Activated naive CD4-positive, alpha-beta T cell treated with anti-CD3 and anti-CD28 coated beads for 36 hours (primary cell): ENCODE measurements at regions of chr7 and their contacts with region 1.

Region 1: GRCh38 chr7:12458520-12459131 is 55.0 kb upstream of the VWDE start:
- DNase-seq: no peak
- H3K4me3 Mint-ChIP-seq: no peak overlapping the region
- H3K27ac Mint-ChIP-seq: no peak overlapping the region
- H3K4me1 Mint-ChIP-seq: no peaks in the 10 kb centered on the region
- H3K27me3 Mint-ChIP-seq: peaks cover 11% of the 10 kb centered on the region

Region 2: DNA sequence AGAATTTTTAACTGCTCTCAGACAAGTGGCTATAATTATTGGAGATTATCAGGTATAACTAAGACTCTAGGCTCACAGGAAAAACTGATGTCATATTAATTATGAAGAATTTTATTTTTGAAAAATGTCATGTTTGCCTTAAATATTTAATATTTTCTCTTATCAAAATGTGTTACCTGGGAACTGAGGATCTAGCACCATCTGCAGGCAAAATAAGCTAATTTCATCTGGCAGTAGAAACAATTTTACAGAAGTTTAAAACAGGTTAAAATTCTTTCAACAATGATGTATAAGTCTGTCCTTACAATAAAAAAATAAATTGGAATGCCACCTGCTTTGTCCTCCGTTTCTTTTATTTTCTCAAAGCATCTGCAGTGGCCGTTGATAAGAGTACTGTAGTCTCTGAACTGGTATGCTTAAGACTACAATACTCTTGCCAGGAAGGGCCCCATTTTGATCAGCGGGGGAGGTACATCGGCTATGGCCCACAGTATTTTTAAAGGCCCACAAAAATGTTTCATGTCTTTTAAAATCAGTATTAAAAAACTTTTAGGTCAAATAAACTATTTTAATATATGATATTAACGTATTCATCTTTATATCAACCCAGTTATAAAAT is 136.2 kb before region 1 on chr7:
- CTCF ChIA-PET with region 1: no interaction called
- intact Hi-C with region 1: no loop called
- DNase-seq: peak; percentile 31
- H3K4me3 Mint-ChIP-seq: no peak overlapping the region
- H3K27ac Mint-ChIP-seq: no peak overlapping the region
- H3K4me1 Mint-ChIP-seq: peaks cover 2% of the 10 kb centered on the region
- H3K27me3 Mint-ChIP-seq: no peaks in the 10 kb centered on the region

Region 3: DNA sequence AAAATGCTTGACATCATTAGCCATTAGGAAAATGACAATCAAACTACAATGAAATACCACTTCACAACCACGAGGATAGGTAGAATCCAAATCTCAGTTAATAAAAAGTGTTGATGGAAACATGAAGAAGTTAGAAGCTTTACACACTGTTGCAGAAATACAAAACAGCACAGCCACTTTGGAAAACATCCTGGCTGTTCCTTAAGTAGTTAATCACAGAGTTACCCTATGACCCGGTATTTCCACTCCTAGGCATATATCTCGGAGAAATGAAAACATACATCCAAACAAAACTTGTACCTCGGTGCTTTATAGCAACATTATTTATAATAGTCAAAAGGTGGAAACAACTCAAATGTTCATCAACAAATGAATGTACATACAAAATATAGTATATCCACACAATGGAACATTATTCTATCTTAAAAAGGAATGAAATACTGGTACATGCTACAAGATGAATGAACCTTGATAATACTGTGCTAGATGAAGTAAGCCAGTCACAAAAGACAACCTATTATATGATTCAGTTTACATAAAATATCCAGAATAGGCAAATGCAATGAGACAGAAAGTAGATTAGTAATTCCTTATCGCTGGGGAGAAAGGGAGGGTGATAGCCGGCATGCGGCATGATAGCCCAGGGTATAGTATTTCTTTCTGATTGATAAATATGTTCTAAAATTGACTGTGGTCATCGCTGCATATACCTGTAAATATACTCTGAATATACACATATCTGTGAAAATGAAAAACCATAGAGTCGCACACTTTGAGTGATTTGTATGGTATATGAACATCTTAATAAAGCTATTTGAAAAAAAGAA is 56.9 kb before region 1 on chr7:
- CTCF ChIA-PET with region 1: no interaction called
- intact Hi-C with region 1: no loop called
- DNase-seq: no peak
- H3K4me3 Mint-ChIP-seq: no peak overlapping the region
- H3K27ac Mint-ChIP-seq: no peak overlapping the region
- H3K4me1 Mint-ChIP-seq: peaks cover 8% of the 10 kb centered on the region
- H3K27me3 Mint-ChIP-seq: peaks cover 18% of the 10 kb centered on the region

Region 4: DNA sequence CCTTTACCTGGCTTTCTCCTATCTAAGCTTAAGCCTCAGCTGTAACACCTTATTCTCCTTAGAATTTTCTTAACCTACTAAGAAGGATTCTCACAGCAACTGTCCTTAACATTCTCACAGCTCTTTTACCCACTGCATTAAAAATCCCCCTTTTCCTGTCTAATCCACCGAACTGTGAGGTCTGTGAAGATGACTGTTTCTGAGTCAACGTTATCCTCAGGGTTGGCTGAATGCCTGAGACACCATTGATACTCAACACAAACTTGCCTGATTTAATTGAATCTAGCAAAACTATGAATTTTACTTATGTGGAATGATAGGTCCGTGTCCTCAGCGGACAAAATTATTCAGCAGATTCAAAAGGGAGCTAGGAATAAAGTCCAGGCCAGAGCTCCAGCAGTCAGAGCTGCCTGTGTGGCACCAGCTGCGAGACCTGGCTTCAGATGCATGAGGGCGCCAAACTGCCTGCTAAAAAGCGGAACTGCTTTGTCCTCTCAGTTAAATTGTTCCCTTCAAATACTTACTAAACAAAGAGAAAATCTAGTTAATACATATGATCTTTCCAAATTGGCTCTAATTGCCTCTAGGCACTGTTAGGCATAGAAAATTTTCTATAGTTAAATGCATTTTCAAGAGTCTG is 21.6 kb before region 1 on chr7:
- CTCF ChIA-PET with region 1: interaction called, 16 read pairs
- intact Hi-C with region 1: no loop called
- DNase-seq: no peak
- H3K4me3 Mint-ChIP-seq: no peak overlapping the region
- H3K27ac Mint-ChIP-seq: no peak overlapping the region
- H3K4me1 Mint-ChIP-seq: no peaks in the 10 kb centered on the region
- H3K27me3 Mint-ChIP-seq: peaks cover 12% of the 10 kb centered on the region

Region 5: GRCh38 chr7:12469568-12469967 is 10.9 kb after region 1 on chr7:
- CTCF ChIA-PET with region 1: interaction called, 32 read pairs
- intact Hi-C with region 1: no loop called
- DNase-seq: no peak
- H3K4me3 Mint-ChIP-seq: no peak overlapping the region
- H3K27ac Mint-ChIP-seq: no peak overlapping the region
- H3K4me1 Mint-ChIP-seq: no peaks in the 10 kb centered on the region
- H3K27me3 Mint-ChIP-seq: no peaks in the 10 kb centered on the region

Region 6: GRCh38 chr7:12475362-12476063 is 16.9 kb after region 1 on chr7:
- CTCF ChIA-PET with region 1: interaction called, 32 read pairs
- intact Hi-C with region 1: no loop called
- DNase-seq: no peak
- H3K4me3 Mint-ChIP-seq: no peak overlapping the region
- H3K27ac Mint-ChIP-seq: no peak overlapping the region
- H3K4me1 Mint-ChIP-seq: no peaks in the 10 kb centered on the region
- H3K27me3 Mint-ChIP-seq: no peaks in the 10 kb centered on the region

Region 7: GRCh38 chr7:12623897-12624498 is 165.4 kb after region 1 on chr7:
- CTCF ChIA-PET with region 1: interaction called, 3 read pairs
- intact Hi-C with region 1: loop called (anchors 10 kb)
- DNase-seq: no peak
- H3K4me3 Mint-ChIP-seq: no peak overlapping the region
- H3K27ac Mint-ChIP-seq: no peak overlapping the region
- H3K4me1 Mint-ChIP-seq: no peaks in the 10 kb centered on the region
- H3K27me3 Mint-ChIP-seq: peaks cover 3% of the 10 kb centered on the region

Region 8: DNA sequence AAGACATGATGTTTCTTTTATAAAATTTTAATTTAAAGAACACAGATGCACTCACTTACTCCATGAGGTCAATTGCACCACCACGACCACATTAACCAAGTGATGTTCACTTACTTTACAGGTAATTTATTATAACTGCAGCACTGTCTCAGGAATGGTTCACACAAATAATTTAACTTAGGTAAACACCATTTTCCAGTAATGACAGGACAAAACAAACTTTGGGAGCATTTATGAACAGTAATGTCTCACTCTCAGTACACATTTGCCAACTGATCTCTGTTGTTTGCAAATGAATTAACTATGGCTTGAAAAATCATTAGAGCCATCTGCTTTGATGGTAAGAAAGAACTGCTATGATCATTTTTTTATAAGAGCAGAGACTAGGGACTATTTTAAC is 1380.4 kb after region 1 on chr7:
- CTCF ChIA-PET with region 1: no interaction called
- intact Hi-C with region 1: no loop called
- DNase-seq: no peak
- H3K4me3 Mint-ChIP-seq: no peak overlapping the region
- H3K27ac Mint-ChIP-seq: no peak overlapping the region
- H3K4me1 Mint-ChIP-seq: no peaks in the 10 kb centered on the region
- H3K27me3 Mint-ChIP-seq: no peaks in the 10 kb centered on the region